MCF 10A (cell line): ENCODE measurements at regions of chr9 and their contacts with region 1.

Region 1: GRCh38 chr9:14302405-14302804 is 11.5 kb downstream of the NFIB start:
- DNase-seq: no peak
- H3K4me3 Mint-ChIP-seq: no peak overlapping the region
- H3K27ac Mint-ChIP-seq: no peak overlapping the region
- H3K4me1 Mint-ChIP-seq: peaks cover 36% of the 10 kb centered on the region
- H3K27me3 Mint-ChIP-seq: no peaks in the 10 kb centered on the region
- CTCF ChIP-seq: no peak

Region 2: DNA sequence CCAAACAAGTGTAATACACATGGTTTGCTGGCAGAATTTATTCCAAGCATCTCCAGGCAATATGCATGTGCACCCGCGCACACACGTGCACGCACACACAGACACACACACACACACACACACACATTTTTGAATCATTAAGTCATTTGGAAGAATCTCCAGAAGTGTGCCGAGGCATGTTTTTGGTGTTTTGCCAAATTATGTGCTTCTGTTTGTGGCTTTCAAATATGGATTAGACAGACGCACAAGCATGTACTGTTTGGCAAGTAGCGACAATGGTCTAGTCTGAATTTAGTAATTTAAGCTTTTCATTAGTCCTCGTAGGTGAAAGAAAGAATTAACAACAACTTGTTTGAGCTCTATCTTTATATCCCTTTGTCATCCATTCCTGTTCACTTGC is 25.2 kb before region 1 on chr9:
- CTCF ChIA-PET with region 1: interaction called, 4 read pairs
- POLR2A ChIA-PET with region 1: interaction called, 18 read pairs
- intact Hi-C with region 1: no loop called
- DNase-seq: peak; percentile 83
- H3K4me3 Mint-ChIP-seq: peak overlapping the region; percentile 54
- H3K27ac Mint-ChIP-seq: peak overlapping the region; percentile 63
- H3K4me1 Mint-ChIP-seq: peaks cover 71% of the 10 kb centered on the region
- H3K27me3 Mint-ChIP-seq: no peaks in the 10 kb centered on the region
- CTCF ChIP-seq: no peak

Region 3: DNA sequence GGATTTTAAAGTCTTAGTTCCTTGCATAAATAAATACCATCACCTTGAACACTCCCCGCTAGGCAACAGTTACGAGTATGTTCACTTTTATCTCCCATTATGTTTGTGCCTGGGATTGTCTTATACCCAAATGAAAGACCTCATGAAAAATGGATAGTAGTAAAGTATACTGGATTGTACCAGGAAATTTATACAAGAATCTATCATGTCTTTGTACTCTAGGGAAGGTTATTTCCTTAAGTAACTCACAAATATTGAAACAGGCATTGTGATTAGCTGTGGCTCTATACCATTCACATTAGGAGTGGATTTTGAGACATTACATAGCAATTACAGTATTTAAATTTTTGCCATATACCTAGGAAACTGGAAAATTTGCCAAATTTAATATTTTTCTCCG is 12.5 kb before region 1 on chr9:
- CTCF ChIA-PET with region 1: no interaction called
- POLR2A ChIA-PET with region 1: interaction called, 16 read pairs
- intact Hi-C with region 1: no loop called
- DNase-seq: no peak
- H3K4me3 Mint-ChIP-seq: no peak overlapping the region
- H3K27ac Mint-ChIP-seq: no peak overlapping the region
- H3K4me1 Mint-ChIP-seq: peaks cover 16% of the 10 kb centered on the region
- H3K27me3 Mint-ChIP-seq: no peaks in the 10 kb centered on the region
- CTCF ChIP-seq: no peak